Activated B cell treated with CpG ODN at 0.5 μM for 24 hours (primary cell): ENCODE measurements at regions of chr14 and their contacts with region 1.

Region 1: GRCh38 chr14:76956316-76957090 is 72.0 kb downstream of the IRF2BPL start:
- DNase-seq: peak; percentile 75
- ATAC-seq: peak; percentile 68
- H3K4me3 Mint-ChIP-seq: peak overlapping the region; percentile 86
- H3K27ac Mint-ChIP-seq: peak overlapping the region; percentile 94
- H3K4me1 Mint-ChIP-seq: peaks cover 75% of the 10 kb centered on the region
- H3K27me3 Mint-ChIP-seq: no peaks in the 10 kb centered on the region
- CTCF ChIP-seq: no peak

Region 2: GRCh38 chr14:76904740-76905438 is 51.6 kb before region 1 on chr14:
- CTCF ChIA-PET with region 1: no interaction called
- POLR2A ChIA-PET with region 1: interaction called, 21 read pairs
- intact Hi-C with region 1: loop called (anchors 1 kb)
- DNase-seq: peak; percentile 73
- ATAC-seq: peak; percentile 92
- H3K4me3 Mint-ChIP-seq: peak overlapping the region; percentile 63
- H3K27ac Mint-ChIP-seq: peak overlapping the region; percentile 93
- H3K4me1 Mint-ChIP-seq: peaks cover 39% of the 10 kb centered on the region
- H3K27me3 Mint-ChIP-seq: no peaks in the 10 kb centered on the region
- CTCF ChIP-seq: no peak

Region 3: GRCh38 chr14:76977793-76978720 is 21.6 kb after region 1 on chr14:
- CTCF ChIA-PET with region 1: interaction called, 5 read pairs
- POLR2A ChIA-PET with region 1: interaction called, 65 read pairs
- intact Hi-C with region 1: loop called (anchors 1 kb)
- DNase-seq: peak; percentile 74
- ATAC-seq: peak; percentile 96
- H3K4me3 Mint-ChIP-seq: peak overlapping the region; percentile 63
- H3K27ac Mint-ChIP-seq: peak overlapping the region; percentile 88
- H3K4me1 Mint-ChIP-seq: peaks cover 31% of the 10 kb centered on the region
- H3K27me3 Mint-ChIP-seq: no peaks in the 10 kb centered on the region
- CTCF ChIP-seq: no peak

Region 4: DNA sequence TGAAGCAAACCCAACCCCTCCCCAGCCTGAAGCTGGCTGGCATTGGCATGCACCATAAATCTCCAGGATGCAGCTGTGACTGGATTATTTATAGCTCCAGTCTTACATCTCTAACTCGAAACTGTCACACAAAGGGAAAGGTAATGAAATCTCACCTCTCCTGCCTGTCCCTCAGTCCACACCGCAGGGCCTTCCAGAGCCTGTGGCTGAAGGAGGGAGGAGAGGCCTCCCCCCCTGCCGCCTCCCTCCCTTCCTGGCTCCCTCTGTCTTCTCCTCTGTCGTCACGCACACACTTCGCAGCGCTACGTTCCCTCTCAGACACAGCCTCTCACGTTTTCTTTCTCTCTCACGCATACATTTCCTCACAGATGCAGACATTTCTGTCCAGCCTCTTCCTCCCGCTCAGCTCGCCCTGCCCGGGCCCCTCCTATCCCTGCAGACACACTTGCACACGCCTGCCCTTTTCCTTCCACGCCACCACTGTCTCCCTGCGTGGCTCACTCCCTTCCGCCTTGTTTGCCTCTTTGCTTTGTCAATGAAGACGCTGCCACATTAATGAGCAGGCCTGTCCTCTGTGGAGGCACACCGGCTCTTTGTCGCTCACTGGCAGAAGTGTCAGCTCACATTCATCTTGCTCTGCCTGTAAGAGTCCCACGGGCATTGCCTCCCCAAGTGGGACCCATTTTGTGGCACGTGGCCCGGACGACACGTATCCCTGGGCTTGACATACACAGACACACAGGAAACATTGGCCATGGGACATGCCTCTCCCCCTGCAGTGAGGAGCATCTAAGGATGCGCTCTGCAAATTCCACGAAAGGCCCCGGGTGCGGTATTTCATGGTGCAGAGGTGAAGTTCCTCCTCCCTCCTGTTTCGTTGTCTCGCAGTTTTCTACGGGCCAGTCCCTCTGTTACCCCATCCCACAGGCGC is 44.1 kb after region 1 on chr14:
- CTCF ChIA-PET with region 1: no interaction called
- POLR2A ChIA-PET with region 1: interaction called, 7 read pairs
- intact Hi-C with region 1: loop called (anchors 2 kb)
- DNase-seq: no peak
- ATAC-seq: peak; percentile 72
- H3K4me3 Mint-ChIP-seq: peak overlapping the region; percentile 80
- H3K27ac Mint-ChIP-seq: peak overlapping the region; percentile 62
- H3K4me1 Mint-ChIP-seq: peaks cover 32% of the 10 kb centered on the region
- H3K27me3 Mint-ChIP-seq: no peaks in the 10 kb centered on the region
- CTCF ChIP-seq: no peak

Region 5: DNA sequence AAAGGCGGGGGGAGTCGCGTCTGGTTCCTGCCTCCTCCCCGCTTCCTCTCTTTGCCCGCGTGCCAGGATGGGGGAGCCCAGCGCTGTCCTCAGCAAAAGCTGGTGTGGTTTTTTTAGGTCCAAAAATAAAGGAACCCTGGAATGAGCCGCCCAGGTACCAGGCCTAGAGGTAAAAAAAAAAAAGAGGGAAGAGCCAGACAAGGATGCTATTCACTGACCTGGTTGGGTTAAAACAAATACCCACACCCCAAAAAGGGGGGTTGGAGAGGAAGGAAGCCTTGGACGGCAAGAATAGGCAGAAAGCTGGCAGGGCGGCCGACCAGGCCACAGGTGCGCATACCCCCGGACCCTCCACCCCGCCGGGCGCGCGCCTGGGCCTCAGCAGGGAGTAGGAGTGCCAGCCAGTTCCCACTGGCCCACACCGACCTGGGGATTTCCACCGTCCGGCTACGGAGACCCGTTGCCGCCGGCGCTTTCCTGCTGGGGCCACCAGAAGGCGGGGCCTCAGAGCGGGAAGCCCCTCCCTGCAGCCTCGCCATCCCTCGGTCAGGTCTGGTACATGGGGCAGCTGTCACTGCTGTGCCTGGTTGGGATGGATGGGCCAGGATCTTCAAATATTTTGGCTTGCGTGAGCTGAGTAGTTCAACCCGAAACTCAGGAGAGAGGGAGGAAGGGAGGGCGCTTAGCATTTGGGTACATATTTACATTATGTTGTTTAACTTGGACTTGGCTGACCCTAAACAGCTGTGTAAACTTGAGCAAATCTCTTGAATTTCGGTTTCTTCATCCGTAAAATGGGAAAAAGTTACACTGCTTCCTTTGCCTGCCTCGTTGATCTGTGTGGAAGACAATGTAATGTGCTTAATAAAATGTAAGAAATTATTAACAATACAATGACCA is 77.4 kb after region 1 on chr14:
- CTCF ChIA-PET with region 1: interaction called, 7 read pairs
- POLR2A ChIA-PET with region 1: interaction called, 149 read pairs
- intact Hi-C with region 1: no loop called
- DNase-seq: peak; percentile 74
- ATAC-seq: peak; percentile 82
- H3K4me3 Mint-ChIP-seq: peak overlapping the region; percentile 88
- H3K27ac Mint-ChIP-seq: peak overlapping the region; percentile 97
- H3K4me1 Mint-ChIP-seq: peaks cover 67% of the 10 kb centered on the region
- H3K27me3 Mint-ChIP-seq: no peaks in the 10 kb centered on the region
- CTCF ChIP-seq: no peak

Region 6: DNA sequence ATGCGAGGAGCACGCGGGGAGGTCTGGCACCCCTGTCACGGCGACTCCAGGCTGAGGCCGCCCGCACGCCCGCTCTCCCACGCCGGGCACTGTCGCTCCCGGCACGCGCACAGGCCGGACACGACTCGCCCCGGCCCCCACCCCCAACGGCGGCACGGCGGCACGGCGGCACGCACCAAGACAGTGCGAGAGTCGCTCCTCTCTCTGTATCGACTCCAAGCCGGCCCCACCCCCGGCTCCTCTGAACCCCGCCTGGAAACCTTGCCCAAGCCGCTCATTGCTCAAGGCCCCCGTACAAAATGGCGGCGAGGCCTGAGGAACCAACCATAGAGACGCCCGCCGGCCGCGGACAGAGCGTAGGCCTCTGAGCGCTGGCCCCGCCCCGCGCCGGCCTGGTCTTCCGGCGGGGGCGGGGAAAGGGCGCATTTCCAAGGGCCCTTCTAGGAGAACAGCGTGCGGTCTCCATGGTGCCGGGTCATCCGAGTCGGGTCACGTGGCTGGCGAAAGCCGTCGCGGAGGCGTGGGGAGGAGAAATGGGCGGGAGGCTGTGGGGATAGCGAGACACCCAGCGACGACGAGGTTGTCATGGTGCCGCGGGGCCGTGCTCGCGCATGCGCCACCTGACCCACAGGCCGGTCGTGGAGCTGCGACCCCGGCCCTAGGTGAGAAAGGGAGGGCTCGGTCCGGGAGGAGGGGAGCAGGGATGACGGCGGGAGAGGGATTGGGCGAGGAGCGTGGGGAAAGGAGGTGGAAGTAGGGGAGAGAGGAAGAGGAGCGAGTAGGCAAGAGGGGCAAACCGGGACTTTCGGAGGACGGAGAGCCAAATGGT is 141.4 kb after region 1 on chr14 and contains the start of gene CIPC:
- CTCF ChIA-PET with region 1: no interaction called
- POLR2A ChIA-PET with region 1: interaction called, 4 read pairs
- intact Hi-C with region 1: loop called (anchors 1 kb)
- DNase-seq: peak; percentile 96
- ATAC-seq: peak; percentile 86
- H3K4me3 Mint-ChIP-seq: peak within 1 kb of the TSS; percentile 99
- H3K27ac Mint-ChIP-seq: peak within 1 kb of the TSS; percentile 98
- H3K4me1 Mint-ChIP-seq: peaks cover 72% of the 10 kb centered on the region
- H3K27me3 Mint-ChIP-seq: no peaks in the 10 kb centered on the region
- CTCF ChIP-seq: no peak
- total RNA-seq, gene CIPC: 26.6 and 28.5 TPM in 2 replicates

Region 7: GRCh38 chr14:77158175-77158891 is 201.8 kb after region 1 on chr14:
- CTCF ChIA-PET with region 1: no interaction called
- POLR2A ChIA-PET with region 1: no interaction called
- intact Hi-C with region 1: no loop called
- DNase-seq: no peak
- ATAC-seq: no peak
- H3K4me3 Mint-ChIP-seq: no peak overlapping the region
- H3K27ac Mint-ChIP-seq: no peak overlapping the region
- H3K4me1 Mint-ChIP-seq: no peaks in the 10 kb centered on the region
- H3K27me3 Mint-ChIP-seq: peaks cover 48% of the 10 kb centered on the region
- CTCF ChIP-seq: no peak

Region 8: DNA sequence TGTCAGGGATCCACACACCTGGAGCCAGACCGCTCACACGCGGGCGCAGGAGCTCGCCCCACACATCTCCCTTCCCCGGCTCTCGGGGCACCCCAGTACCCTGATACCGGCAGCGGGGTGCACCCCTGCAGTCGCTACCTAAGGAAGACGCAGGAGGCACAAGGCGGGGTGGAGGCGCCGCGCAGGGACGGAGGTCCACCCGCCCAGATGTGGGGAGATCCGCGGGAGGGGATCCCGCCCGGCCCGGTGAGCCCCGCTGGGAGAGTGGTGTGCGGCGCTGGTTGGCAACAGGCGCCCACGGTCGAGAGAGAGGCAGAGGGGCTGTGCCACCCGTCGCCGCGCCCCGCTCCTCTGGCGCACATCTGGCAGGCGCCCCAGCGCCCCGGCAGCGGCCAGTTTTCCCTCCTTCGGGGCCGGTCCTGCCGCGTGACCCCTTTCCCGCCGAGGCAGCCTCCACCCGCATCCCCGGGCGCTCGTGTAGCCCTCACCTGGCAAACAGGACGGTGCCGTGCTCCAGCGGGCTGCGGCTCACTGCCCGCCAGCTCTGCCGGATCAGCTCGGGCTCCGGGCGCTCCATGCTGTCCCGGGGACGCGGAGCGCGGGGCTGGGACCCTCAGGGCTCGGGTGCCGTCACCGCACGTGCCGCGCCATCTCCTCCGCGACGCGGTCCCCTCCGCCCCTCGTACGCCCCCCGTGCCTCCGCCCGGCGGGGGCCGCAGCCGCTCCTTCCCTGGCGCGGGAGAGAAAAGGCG is 314.0 kb after region 1 on chr14:
- CTCF ChIA-PET with region 1: no interaction called
- POLR2A ChIA-PET with region 1: no interaction called
- intact Hi-C with region 1: no loop called
- DNase-seq: no peak
- ATAC-seq: no peak
- H3K4me3 Mint-ChIP-seq: no peak overlapping the region
- H3K27ac Mint-ChIP-seq: no peak overlapping the region
- H3K4me1 Mint-ChIP-seq: peaks cover 3% of the 10 kb centered on the region
- H3K27me3 Mint-ChIP-seq: peaks cover 27% of the 10 kb centered on the region
- CTCF ChIP-seq: no peak